Upper lobe of right lung (tissue), 1 donor: ENCODE measurements at regions of chr3 and their contacts with region 1.

Region 1: GRCh38 chr3:46378426-46378942 is 7.7 kb downstream of the CCR5 start:
- DNase-seq: peak; percentile 85
- ATAC-seq: peak; percentile 83
- H3K4me3 ChIP-seq: no peak overlapping the region
- H3K27ac ChIP-seq: no peak overlapping the region
- H3K4me1 ChIP-seq: peaks cover 26% of the 10 kb centered on the region
- H3K27me3 ChIP-seq: no peaks in the 10 kb centered on the region
- CTCF ChIP-seq: peak; percentile 74

Region 2: DNA sequence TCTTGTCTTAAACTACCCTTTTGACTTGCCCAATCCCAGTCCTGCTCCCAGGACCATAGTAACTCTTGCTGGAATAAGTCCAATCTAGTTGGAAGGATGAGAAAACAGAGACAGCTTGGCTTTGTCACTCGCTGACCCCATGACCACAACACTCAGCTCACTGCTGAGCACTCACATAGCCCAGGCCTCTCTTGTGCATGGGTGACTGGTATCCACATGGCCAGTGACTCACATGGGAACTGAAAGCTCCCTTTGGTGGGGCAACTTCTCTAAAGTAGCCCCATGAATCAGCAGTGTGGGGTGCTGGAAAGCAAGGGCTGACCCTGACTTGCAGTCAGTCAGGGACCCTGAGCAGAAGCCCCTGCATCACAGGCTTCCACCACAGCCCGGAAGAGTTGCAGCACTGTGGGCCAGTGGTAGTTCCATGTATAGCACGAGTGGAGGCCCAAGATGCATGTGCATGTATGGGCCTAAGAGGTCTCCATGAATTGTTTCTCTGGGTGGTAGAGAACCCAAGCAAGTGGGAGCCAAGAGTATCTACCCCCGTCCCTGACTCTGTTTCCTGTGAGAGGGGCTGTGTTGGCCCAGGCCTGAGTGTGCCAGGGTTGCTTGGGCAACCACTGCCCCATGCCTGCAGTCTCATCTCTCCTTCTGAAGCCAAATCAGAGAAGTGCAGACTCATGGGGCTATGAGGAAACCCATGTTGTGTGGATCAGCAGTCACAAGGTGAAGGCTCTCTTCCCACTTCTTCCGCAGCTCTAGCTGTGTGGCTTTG is 289.1 kb before region 1 on chr3:
- intact Hi-C with region 1: loop called (anchors 10 kb)
- DNase-seq: peak; percentile 77
- ATAC-seq: peak; percentile 91
- H3K4me3 ChIP-seq: no peak overlapping the region
- H3K27ac ChIP-seq: peak overlapping the region; percentile 74
- H3K4me1 ChIP-seq: peaks cover 25% of the 10 kb centered on the region
- H3K27me3 ChIP-seq: no peaks in the 10 kb centered on the region
- CTCF ChIP-seq: no peak

Region 3: DNA sequence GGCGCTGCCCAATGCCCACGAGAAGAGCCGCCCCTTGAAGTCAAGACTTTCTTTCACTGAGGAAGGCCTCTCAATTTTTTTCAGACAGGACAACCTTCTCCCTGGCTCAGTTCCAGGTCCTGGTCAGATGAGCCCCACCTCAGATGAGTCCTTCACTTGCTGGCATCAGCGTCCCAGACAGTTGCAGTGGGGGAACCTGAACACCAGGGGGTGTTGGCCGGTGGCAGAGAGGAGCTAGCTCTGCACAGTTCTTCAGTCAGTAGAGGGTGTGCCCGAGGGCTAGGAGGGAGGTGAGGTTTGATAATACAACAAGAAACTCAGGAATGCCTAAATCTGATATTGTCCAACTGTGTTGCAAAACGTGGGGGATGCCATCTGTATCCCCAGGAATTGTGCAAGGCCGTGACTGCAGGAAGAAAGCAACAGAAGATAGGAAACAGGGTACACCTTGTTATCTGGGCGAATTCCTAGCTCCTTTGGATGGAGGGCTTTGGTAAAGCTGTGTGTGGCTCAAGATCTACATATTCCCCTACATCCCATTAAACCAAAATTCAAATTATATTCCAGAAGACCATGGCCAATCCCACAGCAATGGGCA is 101.9 kb before region 1 on chr3:
- intact Hi-C with region 1: loop called (anchors 10 kb)
- DNase-seq: peak; percentile 82
- ATAC-seq: peak; percentile 98
- H3K4me3 ChIP-seq: no peak overlapping the region
- H3K27ac ChIP-seq: no peak overlapping the region
- H3K4me1 ChIP-seq: no peaks in the 10 kb centered on the region
- H3K27me3 ChIP-seq: no peaks in the 10 kb centered on the region
- CTCF ChIP-seq: peak; percentile 75